Dendritic cell treated with granulocyte-macrophage colony-stimulating factor and Interleukin-4, amounts not matched to agents 40 ng/mL and 50 ng/mL, for 4 days (primary cell): ENCODE measurements at regions of chr11 and their contacts with region 1.

Region 1: GRCh38 chr11:120936356-120936755 is 87.5 kb upstream of the TBCEL start:
- H3K4me3 Mint-ChIP-seq: no peak overlapping the region
- H3K27ac Mint-ChIP-seq: no peak overlapping the region
- H3K4me1 Mint-ChIP-seq: no peaks in the 10 kb centered on the region
- H3K27me3 Mint-ChIP-seq: peaks cover 18% of the 10 kb centered on the region

Region 2: GRCh38 chr11:121112498-121113455 is 176.4 kb after region 1 on chr11:
- intact Hi-C with region 1: loop called (anchors 5 kb)
- H3K4me3 Mint-ChIP-seq: no peak overlapping the region
- H3K27ac Mint-ChIP-seq: no peak overlapping the region
- H3K4me1 Mint-ChIP-seq: no peaks in the 10 kb centered on the region
- H3K27me3 Mint-ChIP-seq: peaks cover 33% of the 10 kb centered on the region